PC-9 (cell line): ENCODE measurements at regions of chr12 and their contacts with region 1.

Region 1: DNA sequence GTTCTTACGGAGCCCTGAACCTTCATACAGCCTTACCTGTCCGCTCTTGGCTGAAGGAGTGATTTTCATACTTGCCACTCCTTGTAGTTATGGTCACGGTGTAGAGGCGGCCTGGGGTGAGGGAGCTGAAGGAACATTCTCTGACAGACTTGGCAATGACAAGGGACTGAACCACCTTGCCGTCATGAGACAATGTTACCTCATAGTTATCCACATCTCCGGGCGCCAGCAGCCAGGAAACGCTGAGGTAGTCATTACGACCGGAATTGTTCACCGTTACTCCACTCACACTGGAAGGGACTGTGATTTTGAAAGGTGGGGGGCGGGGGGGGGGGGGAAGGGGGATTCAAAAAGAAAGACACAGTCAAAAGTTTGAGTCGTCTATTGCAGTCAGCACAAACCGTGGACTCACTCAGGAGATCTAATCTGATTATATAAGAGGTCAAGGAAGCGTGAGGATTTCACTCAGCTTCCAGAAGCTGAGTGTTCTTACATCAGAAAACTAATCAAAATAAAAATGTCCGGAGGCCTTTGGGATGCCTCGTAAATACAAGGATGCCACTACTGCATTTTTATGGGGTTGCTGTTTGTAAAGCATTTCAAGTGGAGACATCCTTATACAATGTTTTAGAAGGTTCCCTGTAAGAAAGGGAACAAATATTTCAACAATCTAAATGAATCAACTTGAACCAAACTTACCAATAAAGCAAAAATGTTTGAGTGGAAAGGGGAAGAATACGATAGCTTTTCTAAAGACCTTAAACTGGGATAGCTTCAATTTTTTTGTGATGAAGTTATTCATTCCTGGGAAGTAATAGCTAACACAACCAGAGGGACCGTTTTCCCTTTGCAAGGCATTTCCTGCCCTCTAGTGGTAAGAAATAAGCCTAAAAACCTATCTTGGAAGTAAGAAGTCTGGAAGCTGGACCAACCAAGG is 60.6 kb downstream of the PTPRB start:
- DNase-seq: peak in 1 of 2 experiments; percentile 65
- H3K4me3 ChIP-seq: no peak overlapping the region
- H3K27ac ChIP-seq: no peak overlapping the region
- H3K4me1 ChIP-seq: no peaks in the 10 kb centered on the region
- H3K27me3 ChIP-seq: no peaks in the 10 kb centered on the region
- CTCF ChIP-seq: peak; percentile 86

Region 2: DNA sequence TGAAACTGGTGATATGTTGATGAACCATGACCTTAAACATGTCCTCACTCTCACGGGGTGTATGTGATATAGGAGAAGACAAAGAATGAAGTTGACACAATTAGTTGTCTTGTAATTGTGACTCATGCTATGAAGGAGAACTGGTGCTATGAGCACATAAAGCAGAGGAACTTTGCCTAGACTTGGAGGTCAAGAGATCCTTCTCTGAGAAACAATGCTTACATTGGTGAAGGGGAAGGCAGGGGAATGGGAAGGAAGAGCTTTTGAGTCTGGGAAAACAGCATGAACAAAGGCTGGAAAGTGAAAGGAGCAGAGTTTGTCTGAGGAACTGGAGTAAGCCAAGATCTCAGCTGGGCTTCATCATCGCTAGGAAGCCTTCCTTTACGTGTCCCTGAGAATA is 668.4 kb before region 1 on chr12:
- CTCF ChIA-PET with region 1: interaction called, 15 read pairs
- POLR2A ChIA-PET with region 1: no interaction called
- intact Hi-C with region 1: no loop called
- DNase-seq: no peak
- H3K4me3 ChIP-seq: no peak overlapping the region
- H3K27ac ChIP-seq: no peak overlapping the region
- H3K4me1 ChIP-seq: no peaks in the 10 kb centered on the region
- H3K27me3 ChIP-seq: no peaks in the 10 kb centered on the region
- CTCF ChIP-seq: no peak